Colonic mucosa (tissue), 4 donors: ENCODE measurements at regions of chr20 and their contacts with region 1.

Region 1: GRCh38 chr20:41619360-41620100 is 1.4 kb upstream of the CHD6 start:
- DNase-seq: no peak
- H3K4me3 ChIP-seq: no peak overlapping the region
- H3K27ac ChIP-seq: no peak overlapping the region
- H3K4me1 ChIP-seq: no peaks in the 10 kb centered on the region
- H3K27me3 ChIP-seq: no peaks in the 10 kb centered on the region
- CTCF ChIP-seq: no peak

Region 2: DNA sequence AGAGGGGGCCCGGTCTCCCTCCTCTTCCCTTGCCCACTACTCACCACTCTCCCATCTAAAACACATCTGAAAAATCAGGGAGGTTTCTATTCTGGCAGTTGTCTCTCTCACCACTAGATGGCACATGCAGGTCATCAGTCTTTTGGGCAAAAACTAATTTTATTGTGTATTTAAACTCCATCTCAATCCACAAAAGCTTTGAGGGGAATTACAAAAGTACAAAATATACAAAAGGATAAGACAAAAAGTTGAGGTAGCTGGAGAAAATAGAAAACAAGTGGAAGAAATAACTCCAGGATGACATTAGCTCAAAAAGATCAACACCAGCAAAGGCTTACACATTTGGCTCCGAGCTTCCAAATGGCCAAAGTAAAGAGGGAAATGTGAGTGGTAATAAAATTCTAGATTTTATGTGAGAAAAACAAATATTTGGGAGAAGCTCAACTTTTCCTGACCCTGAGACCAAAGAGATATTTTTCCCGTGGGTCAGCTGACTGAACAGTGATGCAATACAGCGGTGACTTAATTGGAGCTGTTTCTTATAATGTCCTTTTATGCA is 78.4 kb after region 1 on chr20:
- intact Hi-C with region 1: loop called (anchors 5 kb)
- DNase-seq: peak; percentile 23
- H3K4me3 ChIP-seq: no peak overlapping the region
- H3K27ac ChIP-seq: no peak overlapping the region
- H3K4me1 ChIP-seq: no peaks in the 10 kb centered on the region
- H3K27me3 ChIP-seq: no peaks in the 10 kb centered on the region
- CTCF ChIP-seq: peak; percentile 80

Region 3: GRCh38 chr20:41783423-41784208 is 164.1 kb after region 1 on chr20:
- intact Hi-C with region 1: no loop called
- DNase-seq: no peak
- H3K4me3 ChIP-seq: no peak overlapping the region
- H3K27ac ChIP-seq: no peak overlapping the region
- H3K4me1 ChIP-seq: no peaks in the 10 kb centered on the region
- H3K27me3 ChIP-seq: no peaks in the 10 kb centered on the region
- CTCF ChIP-seq: no peak